ENCODE measurements at regions of chr17 and their contacts with region 1.

Region 1: DNA sequence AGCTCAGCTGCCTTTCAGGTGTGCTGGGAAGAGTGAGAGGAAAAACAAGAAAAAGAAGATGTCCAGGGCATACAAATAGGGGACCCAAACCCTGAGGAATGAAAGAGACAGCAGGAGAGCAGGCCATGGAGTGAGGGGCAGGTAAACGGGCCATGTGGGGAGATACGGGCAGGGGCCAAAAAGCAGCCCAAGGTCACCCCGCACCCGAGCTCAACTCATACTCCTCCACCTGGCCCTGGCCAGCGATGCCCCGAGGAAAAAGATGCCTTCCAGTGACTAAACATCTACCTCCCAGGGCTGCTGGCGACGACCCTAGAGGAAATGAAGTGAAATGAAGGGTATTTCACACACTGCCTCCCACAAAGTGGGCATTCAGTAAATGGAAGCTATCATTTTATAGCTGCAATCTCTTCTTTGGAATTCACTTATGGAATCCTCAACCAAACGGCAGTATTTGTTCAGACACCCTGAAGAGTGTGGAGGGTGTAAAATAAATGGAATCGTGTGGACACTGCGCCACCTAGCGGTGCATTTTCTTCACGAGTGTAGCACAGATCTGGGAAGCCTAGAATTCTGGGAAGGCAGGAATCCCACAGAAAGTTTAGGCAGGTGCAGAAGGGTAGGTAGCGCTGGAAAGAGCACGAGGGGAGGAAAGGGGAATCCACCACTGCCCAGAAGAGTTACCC is 14.9 kb downstream of the ELAC2 start:
- DNase-seq: peak in 1 of 2 donors; percentile 87
- H3K4me3 ChIP-seq: no peak overlapping the region
- H3K27ac ChIP-seq: no peak overlapping the region
- H3K4me1 ChIP-seq: no peaks in the 10 kb centered on the region
- H3K27me3 ChIP-seq: no peaks in the 10 kb centered on the region
- CTCF ChIP-seq: peak; percentile 72 to 90 (median 83)

Region 2: GRCh38 chr17:12180644-12181261 is 822.2 kb before region 1 on chr17:
- intact Hi-C with region 1: loop called (anchors 1 kb)
- DNase-seq: no peak
- H3K4me3 ChIP-seq: peak overlapping the region in 1 of 2 donors; percentile 28
- H3K27ac ChIP-seq: peak overlapping the region in 1 of 2 donors; percentile 58
- H3K4me1 ChIP-seq: peaks cover 0 to 5% of the 10 kb centered on the region in 2 donors
- H3K27me3 ChIP-seq: no peaks in the 10 kb centered on the region
- CTCF ChIP-seq: peak; percentile 58 to 79 (median 76)

Region 3: GRCh38 chr17:12765548-12765947 is 237.4 kb before region 1 on chr17:
- intact Hi-C with region 1: loop called (anchors 10 kb)
- DNase-seq: peak in 1 of 2 donors; percentile 76
- H3K4me3 ChIP-seq: no peak overlapping the region
- H3K27ac ChIP-seq: no peak overlapping the region
- H3K4me1 ChIP-seq: no peaks in the 10 kb centered on the region
- H3K27me3 ChIP-seq: no peaks in the 10 kb centered on the region
- CTCF ChIP-seq: no peak

Region 4: DNA sequence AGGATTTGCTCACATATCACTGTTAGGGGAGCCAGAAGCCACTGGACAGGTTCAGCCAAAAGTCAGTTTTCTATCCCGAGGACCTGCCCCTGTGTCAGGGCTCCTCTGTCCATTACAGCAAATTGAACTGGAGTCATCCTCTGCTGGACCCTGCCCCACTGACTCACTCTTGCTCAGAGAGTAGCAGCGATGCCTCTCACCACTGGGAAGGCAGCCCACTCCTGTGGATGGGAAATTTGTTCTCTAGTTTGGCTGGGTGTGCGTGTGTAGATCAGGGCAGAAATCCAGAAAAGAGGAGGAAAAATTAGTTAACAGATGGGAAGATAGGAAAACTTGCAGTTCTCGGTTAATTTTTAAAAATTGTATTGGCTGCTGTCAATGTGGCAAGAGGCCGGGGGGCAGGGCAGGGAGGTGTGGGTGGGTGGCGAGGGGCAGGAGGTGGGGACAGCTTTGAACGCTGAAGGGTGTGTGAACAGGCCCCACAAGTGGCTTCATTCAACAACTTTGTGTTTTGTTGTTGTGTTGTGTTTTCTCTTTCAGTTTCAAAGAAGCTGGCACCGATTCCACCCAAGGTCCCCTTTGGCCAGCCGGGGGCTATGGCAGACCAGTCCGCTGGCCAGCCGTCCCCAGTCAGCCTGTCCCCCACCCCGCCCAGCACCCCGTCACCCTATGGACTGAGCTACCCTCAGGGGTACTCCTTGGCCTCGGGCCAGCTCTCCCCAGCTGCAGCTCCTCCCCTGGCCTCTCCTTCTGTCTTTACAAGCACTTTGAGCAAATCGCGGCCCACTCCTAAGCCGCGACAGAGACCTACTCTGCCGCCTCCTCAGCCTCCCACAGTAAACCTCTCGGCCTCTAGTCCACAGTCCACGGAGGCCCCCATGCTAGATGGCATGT is 18.7 kb before region 1 on chr17:
- intact Hi-C with region 1: no loop called
- DNase-seq: peak; percentile 19 to 88
- H3K4me3 ChIP-seq: no peak overlapping the region
- H3K27ac ChIP-seq: peak overlapping the region; percentile 31 to 48
- H3K4me1 ChIP-seq: peaks cover 12 to 17% of the 10 kb centered on the region in 2 donors
- H3K27me3 ChIP-seq: no peaks in the 10 kb centered on the region
- CTCF ChIP-seq: no peak

Measured in ascending aorta (tissue), 2 donors.